ENCODE measurements at regions of chr9 and their contacts with region 1.

Region 1: GRCh38 chr9:119026120-119026519 is 343.1 kb downstream of the BRINP1 start:
- DNase-seq: peak; percentile 32 to 54
- ATAC-seq: peak; percentile 49 to 77 (median 70)
- H3K4me3 ChIP-seq: no peak overlapping the region
- H3K27ac ChIP-seq: peak overlapping the region; percentile 51 to 91 (median 85)
- H3K4me1 ChIP-seq: peaks cover 0 to 58% (median 24%) of the 10 kb centered on the region in 9 donors
- H3K27me3 ChIP-seq: no peaks in the 10 kb centered on the region
- CTCF ChIP-seq: no peak

Region 2: GRCh38 chr9:119004620-119004994 is 21.5 kb before region 1 on chr9:
- intact Hi-C with region 1: loop called in 1 of 10 experiments (anchors 2 kb)
- DNase-seq: peak; percentile 17 to 87
- ATAC-seq: peak; percentile 91 to 98 (median 94)
- H3K4me3 ChIP-seq: no peak overlapping the region
- H3K27ac ChIP-seq: peak overlapping the region in 9 of 10 donors; percentile 39 to 86 (median 73)
- H3K4me1 ChIP-seq: peaks cover 0 to 29% (median 17%) of the 10 kb centered on the region in 9 donors
- H3K27me3 ChIP-seq: no peaks in the 10 kb centered on the region
- CTCF ChIP-seq: no peak

Region 3: DNA sequence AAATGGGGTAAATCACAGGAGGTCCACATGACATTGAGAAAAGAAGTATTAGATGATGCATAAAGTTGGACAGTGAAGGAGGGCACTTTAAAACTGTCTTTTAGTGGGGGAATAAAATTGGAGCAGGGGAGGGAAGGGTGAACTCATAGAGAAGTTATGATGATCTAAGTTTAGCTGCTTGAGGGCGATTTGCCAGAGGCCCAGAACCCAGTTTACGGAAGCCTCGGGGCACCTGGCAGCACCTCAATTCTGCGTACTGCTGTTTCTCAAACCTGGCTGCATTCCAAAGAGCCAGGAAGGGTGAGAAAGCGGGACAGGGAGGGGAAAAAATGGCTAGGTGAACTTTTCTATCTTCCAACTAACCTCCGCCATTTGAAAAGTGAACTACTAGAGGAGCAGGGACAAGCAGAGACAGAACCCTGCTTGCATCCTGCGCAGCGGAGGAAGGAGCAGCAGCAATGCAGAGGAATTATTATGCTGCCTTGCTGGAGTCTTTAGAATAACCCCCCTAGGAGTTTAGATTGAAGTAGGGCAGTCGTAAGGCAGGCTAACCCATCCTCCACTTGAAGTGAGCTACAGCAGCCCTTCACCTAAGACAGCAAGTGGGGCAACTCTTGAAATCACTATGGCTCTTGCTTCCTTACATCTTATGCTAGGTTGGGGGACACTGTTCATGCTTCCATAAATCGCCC is 26.4 kb after region 1 on chr9:
- intact Hi-C with region 1: no loop called
- DNase-seq: peak; percentile 38 to 74
- ATAC-seq: peak; percentile 46 to 92 (median 84)
- H3K4me3 ChIP-seq: peak overlapping the region in 6 of 10 donors; percentile 12 to 36 (median 28)
- H3K27ac ChIP-seq: peak overlapping the region; percentile 37 to 88 (median 74)
- H3K4me1 ChIP-seq: peaks cover 0 to 26% (median 0%) of the 10 kb centered on the region in 9 donors
- H3K27me3 ChIP-seq: no peaks in the 10 kb centered on the region
- CTCF ChIP-seq: no peak

Region 4: GRCh38 chr9:119216651-119217331 is 190.7 kb after region 1 on chr9:
- intact Hi-C with region 1: loop called in 1 of 10 experiments (anchors 10 kb)
- DNase-seq: peak in 1 of 2 donors; percentile 30
- ATAC-seq: peak in 6 of 8 donors; percentile 37 to 76 (median 52)
- H3K4me3 ChIP-seq: no peak overlapping the region
- H3K27ac ChIP-seq: peak overlapping the region in 1 of 10 donors; percentile 15
- H3K4me1 ChIP-seq: peaks cover 0 to 9% (median 0%) of the 10 kb centered on the region in 9 donors
- H3K27me3 ChIP-seq: no peaks in the 10 kb centered on the region
- CTCF ChIP-seq: no peak